Activated naive CD4-positive, alpha-beta T cell treated with anti-CD3 and anti-CD28 coated beads for 36 hours (primary cell): ENCODE measurements at regions of chr17 and their contacts with region 1.

Region 1: DNA sequence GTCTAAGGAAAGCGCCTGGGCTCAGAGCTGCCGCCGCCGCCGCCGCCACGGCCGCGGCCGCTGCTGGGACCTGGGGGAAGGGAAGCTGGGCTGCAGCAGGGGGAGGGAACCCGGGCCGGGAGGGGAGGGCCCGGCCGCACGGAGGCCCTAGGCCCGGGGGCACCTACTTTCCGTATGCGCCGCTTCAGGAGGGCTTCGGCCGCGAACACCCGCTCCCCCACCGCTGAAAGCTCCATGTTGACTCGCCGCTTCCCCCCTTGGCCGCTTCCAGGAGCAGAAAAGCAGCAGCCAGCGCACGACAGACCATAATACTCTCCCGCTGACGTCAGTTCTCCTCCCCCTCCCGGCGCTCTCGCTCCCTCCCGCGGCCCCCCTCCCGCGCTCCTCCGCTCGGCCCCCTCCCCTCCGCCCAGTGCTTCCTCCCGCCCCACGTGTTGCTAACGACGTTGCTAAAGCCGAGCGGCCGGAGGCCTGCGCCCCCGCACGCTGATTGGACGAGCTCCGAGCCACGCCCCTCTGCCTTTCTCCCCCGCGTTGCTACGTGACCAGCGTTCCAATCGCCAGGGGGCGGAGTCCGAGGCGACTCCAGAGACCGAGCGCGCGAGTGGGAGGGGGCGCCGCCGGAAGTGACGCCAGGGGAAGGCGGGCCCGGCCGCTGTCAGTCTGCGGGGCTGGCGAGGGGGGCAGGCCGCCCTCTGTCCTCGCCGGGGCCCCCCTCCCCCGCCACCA is at the start of gene CBX8:
- DNase-seq: peak; percentile 100
- H3K4me3 Mint-ChIP-seq: peak within 1 kb of the TSS; percentile 77
- H3K27ac Mint-ChIP-seq: no peak within 1 kb of the TSS
- H3K4me1 Mint-ChIP-seq: peaks cover 37% of the 10 kb centered on the region
- H3K27me3 Mint-ChIP-seq: peaks cover 36% of the 10 kb centered on the region
- total RNA-seq, gene CBX8: 3.8 to 3.9 TPM

Region 2: DNA sequence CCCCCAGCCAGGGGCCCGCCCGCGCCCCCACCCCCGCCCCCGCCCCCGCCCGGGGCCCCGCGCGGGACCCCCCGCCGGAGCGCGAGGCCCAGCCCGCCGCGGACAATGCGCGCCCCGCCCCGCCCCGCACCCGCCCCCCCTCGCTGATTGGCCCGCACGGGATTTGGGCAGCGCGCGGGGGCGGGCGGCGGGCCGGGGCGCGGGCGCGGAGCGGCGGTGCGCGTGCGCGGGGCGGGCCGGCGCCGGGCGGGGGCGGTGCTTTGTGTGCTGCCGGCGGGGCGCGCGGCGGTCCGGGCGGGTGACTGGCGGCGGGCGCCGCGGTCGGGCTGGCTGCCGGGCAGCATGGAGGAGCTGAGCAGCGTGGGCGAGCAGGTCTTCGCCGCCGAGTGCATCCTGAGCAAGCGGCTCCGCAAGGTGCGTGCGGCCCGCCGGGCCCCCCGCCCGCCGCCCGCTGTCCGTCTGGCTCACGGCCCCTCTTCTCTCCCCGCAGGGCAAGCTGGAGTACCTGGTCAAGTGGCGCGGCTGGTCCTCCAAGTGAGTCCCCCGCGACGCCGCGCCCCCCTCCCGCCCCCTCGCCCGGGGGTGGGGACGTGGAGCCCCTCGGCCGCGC is 18.9 kb before region 1 on chr17 and contains the start of gene CBX2:
- CTCF ChIA-PET with region 1: no interaction called
- intact Hi-C with region 1: loop called (anchors 2 kb)
- DNase-seq: peak; percentile 81
- H3K4me3 Mint-ChIP-seq: peak within 1 kb of the TSS; percentile 82
- H3K27ac Mint-ChIP-seq: no peak within 1 kb of the TSS
- H3K4me1 Mint-ChIP-seq: peaks cover 12% of the 10 kb centered on the region
- H3K27me3 Mint-ChIP-seq: peaks cover 68% of the 10 kb centered on the region
- total RNA-seq, gene CBX2: 5.2 to 5.8 TPM

Region 3: GRCh38 chr17:79810130-79811010 is 13.4 kb after region 1 on chr17:
- CTCF ChIA-PET with region 1: interaction called, 5 read pairs
- intact Hi-C with region 1: loop called (anchors 1 kb)
- DNase-seq: peak; percentile 85
- H3K4me3 Mint-ChIP-seq: peak overlapping the region; percentile 29
- H3K27ac Mint-ChIP-seq: no peak overlapping the region
- H3K4me1 Mint-ChIP-seq: peaks cover 31% of the 10 kb centered on the region
- H3K27me3 Mint-ChIP-seq: peaks cover 65% of the 10 kb centered on the region

Region 4: GRCh38 chr17:79902146-79902791 is 105.3 kb after region 1 on chr17:
- CTCF ChIA-PET with region 1: no interaction called
- intact Hi-C with region 1: no loop called
- DNase-seq: no peak
- H3K4me3 Mint-ChIP-seq: no peak overlapping the region
- H3K27ac Mint-ChIP-seq: no peak overlapping the region
- H3K4me1 Mint-ChIP-seq: no peaks in the 10 kb centered on the region
- H3K27me3 Mint-ChIP-seq: no peaks in the 10 kb centered on the region

Region 5: DNA sequence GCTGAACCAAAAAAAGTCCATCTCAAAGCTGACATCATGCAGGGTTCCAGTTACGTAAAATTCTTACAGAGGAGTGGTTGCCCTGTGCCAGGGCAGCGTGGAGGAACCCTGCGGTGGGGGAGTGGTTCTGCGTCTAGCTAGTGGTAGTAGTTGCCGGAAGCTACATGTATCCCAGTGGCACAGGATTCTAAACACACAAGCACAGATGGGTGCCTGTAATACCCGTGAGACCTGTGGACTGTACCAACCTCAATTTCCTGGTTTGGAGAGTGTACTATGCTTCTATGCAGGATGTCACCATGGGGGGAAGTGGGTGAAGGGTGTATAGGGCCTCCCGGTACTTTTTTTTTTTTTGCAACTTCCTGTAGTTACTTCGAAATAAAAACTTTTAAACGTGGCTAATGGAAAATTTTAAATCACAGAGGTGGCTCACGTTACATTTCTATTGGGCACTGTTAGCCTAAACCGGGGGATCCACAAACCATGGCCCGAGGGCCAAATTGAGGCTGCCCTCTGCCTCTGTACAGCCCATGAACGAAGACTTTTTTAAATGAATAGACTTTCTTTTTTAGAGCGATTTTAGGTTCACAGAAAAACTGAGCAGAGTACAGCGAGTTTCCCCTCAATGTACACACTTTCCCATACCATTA is 200.2 kb after region 1 on chr17:
- CTCF ChIA-PET with region 1: no interaction called
- intact Hi-C with region 1: loop called (anchors 1 kb)
- DNase-seq: peak; percentile 92
- H3K4me3 Mint-ChIP-seq: peak overlapping the region; percentile 68
- H3K27ac Mint-ChIP-seq: peak overlapping the region; percentile 97
- H3K4me1 Mint-ChIP-seq: peaks cover 59% of the 10 kb centered on the region
- H3K27me3 Mint-ChIP-seq: no peaks in the 10 kb centered on the region

Region 6: DNA sequence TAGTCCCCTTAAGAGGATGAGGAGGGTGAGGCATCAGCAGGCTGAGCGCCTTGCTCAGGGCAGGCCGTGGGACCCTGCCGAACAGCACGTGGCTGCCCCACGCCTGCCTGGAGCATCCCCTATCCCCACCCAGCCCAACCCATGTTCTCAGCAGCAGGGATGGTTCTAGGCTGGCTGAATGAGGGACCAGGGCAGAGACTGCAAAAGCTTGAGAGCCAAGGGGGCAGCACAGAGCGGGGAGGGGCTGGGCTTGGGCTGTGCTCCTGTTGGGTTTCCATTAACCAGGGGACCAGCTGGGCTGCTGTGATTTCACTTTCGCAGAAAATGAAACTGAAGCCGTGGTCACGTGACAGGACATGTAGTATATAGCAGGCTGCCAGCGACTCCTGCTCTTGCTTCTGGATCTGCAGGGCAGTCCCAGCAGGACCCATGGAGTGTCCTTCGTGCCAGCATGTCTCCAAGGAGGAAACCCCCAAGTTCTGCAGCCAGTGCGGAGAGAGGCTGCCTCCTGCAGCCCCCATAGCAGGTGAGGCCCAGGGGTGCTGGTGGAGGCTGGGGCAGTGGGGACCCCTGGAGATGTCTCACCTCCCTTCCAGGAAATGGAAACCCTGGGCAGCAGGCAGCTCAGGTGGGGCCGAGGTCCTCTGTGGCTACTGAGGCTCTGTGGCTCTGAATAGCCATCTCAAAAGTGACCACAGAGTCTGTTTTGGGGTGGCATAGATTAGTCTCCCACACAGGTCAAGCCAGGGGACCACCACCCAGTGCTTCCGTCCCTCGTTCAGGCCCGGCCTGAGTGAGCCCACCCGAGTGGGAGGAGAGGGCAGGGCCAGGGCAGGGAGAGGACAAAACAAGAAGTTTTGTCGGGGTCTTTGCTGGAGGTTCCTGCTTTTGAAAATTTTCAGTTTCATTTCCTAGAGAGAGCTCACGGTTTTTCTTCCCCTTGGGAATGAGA is 466.6 kb after region 1 on chr17:
- CTCF ChIA-PET with region 1: no interaction called
- intact Hi-C with region 1: loop called (anchors 5 kb)
- DNase-seq: peak; percentile 95
- H3K4me3 Mint-ChIP-seq: peak overlapping the region; percentile 96
- H3K27ac Mint-ChIP-seq: peak overlapping the region; percentile 92
- H3K4me1 Mint-ChIP-seq: peaks cover 60% of the 10 kb centered on the region
- H3K27me3 Mint-ChIP-seq: no peaks in the 10 kb centered on the region